ENCODE measurements at regions of chr1 and their contacts with region 1.

Region 1: DNA sequence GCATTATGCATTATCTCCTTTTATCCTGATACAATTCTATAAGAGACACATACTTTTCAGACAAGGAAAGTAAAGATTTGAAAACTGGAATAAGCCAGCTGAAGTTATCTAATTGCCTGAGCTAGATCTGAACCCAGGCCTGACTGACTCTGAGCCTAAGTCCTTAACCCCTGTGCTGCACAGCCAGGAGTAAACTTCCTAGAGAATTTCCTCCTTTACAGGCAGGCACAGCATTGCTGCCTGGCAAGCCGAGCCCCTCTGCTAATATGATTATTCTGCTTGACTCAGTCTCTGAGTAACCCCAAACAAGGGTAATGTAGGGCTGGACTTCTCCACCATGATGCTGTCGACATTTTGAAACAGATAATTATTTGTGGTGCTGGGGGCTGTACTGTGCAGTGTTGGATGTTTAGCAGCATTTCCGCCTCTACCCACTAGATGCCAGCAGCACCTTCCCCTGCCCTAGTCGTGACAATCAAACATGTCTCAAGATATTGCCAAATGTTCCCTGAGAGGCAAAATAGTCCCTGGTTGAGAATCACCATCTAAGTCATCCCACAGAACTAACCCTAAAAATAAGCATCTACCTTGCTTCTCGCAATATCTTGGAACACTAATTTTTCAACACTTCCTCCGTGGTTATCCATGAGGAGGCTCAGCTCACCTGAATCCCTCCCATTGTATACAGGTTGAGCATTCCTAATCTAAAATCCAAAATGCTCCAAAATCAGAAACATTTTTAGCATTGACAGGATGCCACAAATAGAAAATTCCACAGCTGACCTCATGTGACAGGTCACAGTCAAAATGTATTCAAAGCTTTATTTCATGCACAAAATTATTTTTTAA is 18.5 kb downstream of the CAMK1G start:
- DNase-seq: peak; percentile 40 to 55
- H3K4me3 ChIP-seq: no peak overlapping the region
- H3K27ac ChIP-seq: no peak overlapping the region
- H3K4me1 ChIP-seq: no peaks in the 10 kb centered on the region
- H3K27me3 ChIP-seq: no peaks in the 10 kb centered on the region
- CTCF ChIP-seq: peak in 5 of 6 experiments; percentile 35 to 77 (median 71)
- POLR2A ChIP-seq: no peak

Region 2: DNA sequence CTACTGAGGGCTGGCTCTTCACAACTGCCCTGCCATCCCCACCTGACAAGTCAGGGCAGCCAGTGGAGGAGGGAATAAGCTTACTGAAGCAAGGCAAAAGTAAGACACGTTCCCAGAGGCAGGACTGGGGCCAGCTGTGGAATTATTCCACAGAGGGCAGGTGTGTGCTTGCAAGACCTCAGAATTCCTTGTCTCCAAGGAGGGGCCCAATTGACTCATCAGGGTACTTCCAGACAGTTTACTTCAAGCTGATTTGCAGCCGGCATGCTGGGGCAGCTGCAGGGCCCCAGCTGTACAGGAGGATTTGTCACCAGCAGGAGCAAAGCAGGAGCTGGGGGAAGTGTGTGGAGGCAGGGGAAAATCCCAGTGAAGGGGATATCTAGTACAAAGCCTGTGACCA is 186.0 kb before region 1 on chr1:
- intact Hi-C with region 1: no loop called
- DNase-seq: peak; percentile 62 to 78
- H3K4me3 ChIP-seq: no peak overlapping the region
- H3K27ac ChIP-seq: no peak overlapping the region
- H3K4me1 ChIP-seq: peaks cover 4 to 27% of the 10 kb centered on the region in 2 donors
- H3K27me3 ChIP-seq: no peaks in the 10 kb centered on the region
- CTCF ChIP-seq: no peak
- POLR2A ChIP-seq: no peak

Region 3: DNA sequence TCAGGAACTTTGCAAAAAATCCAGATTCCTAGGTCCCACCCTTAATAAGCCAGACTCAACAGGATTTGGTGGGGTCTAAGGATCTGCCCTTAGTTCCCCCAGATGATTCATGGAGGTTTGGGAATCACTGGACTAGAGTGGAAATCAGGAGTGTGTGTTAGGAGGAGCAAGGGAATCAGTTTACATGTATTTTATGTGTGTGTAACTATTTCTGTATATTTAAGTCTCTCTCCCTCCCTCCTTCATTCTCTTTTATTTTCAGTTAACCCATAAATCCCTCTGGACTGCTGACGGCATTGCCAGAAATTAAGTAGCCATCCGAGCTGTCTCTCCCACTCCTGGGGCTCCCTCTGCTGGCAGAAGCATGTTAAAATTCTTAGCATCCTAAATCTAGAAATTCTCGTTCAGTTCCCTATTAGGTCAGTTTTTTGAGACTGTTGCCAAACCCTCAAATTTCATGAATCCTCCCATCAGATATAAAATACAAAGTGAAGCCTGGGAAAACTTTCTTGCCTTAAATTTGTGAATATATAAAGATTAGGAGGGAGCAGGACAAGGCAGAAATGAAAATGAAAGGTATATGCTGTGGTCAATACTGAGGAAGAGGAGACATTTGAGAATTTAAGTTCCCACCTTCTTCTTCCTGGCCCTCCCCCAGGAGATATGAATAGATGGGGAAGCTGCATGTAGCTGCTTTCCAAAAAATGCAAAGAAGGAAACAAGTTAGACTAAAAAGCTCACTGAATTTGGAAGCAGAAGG is 90.9 kb after region 1 on chr1:
- intact Hi-C with region 1: loop called (anchors 10 kb)
- DNase-seq: peak; percentile 61 to 76
- H3K4me3 ChIP-seq: no peak overlapping the region
- H3K27ac ChIP-seq: no peak overlapping the region
- H3K4me1 ChIP-seq: no peaks in the 10 kb centered on the region
- H3K27me3 ChIP-seq: no peaks in the 10 kb centered on the region
- CTCF ChIP-seq: peak; percentile 62 to 89 (median 79)
- POLR2A ChIP-seq: no peak

Measured in thyroid gland (tissue), 4 donors.